ENCODE measurements at regions of chr9 and their contacts with region 1.

Region 1: DNA sequence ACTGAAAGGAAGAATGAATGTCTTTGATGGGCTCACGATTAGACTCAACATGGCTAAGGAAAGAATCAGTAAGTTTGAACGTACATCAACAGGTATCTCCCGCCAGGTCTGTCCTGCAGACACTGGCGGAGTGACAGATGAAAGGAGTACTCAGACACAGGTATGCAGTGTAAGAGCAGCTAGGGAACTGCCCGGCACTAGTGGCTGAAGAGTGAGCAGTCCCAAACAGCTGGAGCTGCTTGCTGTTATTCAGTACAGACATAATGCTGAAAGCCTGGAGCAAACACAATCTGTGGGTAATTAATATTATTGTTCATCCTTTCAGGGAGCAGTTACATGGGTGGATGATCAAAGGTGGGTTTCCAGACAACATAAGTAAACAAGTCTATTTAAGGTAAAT is 835.5 kb downstream of the TLE4 start:
- DNase-seq: no peak
- ATAC-seq: no peak
- H3K4me3 ChIP-seq: no peak overlapping the region
- H3K4me3 Mint-ChIP-seq: no peak overlapping the region
- H3K27ac ChIP-seq: no peak overlapping the region
- H3K27ac Mint-ChIP-seq: no peak overlapping the region
- H3K4me1 ChIP-seq: no peaks in the 10 kb centered on the region
- H3K4me1 Mint-ChIP-seq: no peaks in the 10 kb centered on the region
- H3K27me3 ChIP-seq: no peaks in the 10 kb centered on the region
- H3K27me3 Mint-ChIP-seq: no peaks in the 10 kb centered on the region
- CTCF ChIP-seq: no peak

Region 2: GRCh38 chr9:80351612-80352011 is 55.6 kb before region 1 on chr9:
- intact Hi-C with region 1: loop called (anchors 10 kb)
- DNase-seq: no peak
- ATAC-seq: no peak
- H3K4me3 ChIP-seq: no peak overlapping the region
- H3K4me3 Mint-ChIP-seq: no peak overlapping the region
- H3K27ac ChIP-seq: no peak overlapping the region
- H3K27ac Mint-ChIP-seq: no peak overlapping the region
- H3K4me1 ChIP-seq: no peaks in the 10 kb centered on the region
- H3K4me1 Mint-ChIP-seq: no peaks in the 10 kb centered on the region
- H3K27me3 ChIP-seq: no peaks in the 10 kb centered on the region
- H3K27me3 Mint-ChIP-seq: no peaks in the 10 kb centered on the region
- CTCF ChIP-seq: no peak

Measured in natural killer cell (primary cell).